Endothelial cell of umbilical vein (primary cell): ENCODE measurements at regions of chr13 and their contacts with region 1.

Region 1: DNA sequence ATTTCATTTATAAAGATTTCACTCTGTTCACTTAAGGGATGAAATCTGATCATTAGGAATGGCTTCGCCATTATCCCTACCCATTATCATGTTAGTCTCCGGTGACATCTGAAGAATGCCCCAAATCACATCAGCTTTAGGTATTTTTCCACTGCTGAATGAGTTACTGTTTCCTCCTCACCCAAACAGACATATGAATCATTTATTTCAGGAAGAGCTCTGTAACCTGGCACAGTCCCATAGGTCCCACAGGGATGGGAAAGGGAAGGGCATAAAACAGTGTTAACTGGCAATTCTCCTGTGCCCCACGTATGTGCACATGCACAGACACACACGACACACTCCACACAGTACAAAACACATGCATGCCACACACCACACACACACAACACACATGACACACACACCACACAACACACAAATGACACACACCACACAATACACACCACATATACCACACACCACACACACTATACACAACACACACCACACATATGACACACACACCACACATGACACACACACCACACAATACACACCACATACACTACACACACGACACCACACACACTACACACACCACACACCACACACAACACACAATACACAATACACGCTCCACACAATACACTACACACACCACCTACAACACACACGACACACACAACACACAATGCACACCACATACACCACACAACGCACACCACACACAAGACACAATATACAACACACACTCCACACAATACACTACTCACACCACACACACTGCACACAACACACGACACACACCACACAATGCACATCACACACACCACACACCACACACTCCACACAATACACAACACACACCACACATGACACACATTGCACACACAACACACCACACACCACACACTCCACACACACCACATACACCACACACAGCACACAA is 15.4 kb downstream of the TMEM255B start:
- DNase-seq: peak; percentile 95
- H3K4me3 ChIP-seq: no peak overlapping the region
- H3K27ac ChIP-seq: peak overlapping the region; percentile 38
- H3K4me1 ChIP-seq: peaks cover 39% of the 10 kb centered on the region
- H3K27me3 ChIP-seq: no peaks in the 10 kb centered on the region
- CTCF ChIP-seq: no peak
- POLR2A ChIP-seq: no peak

Region 2: GRCh38 chr13:113506025-113506685 is 268.3 kb before region 1 on chr13:
- CTCF ChIA-PET with region 1: no interaction called
- POLR2A ChIA-PET with region 1: no interaction called
- dilution Hi-C with region 1: no loop called
- intact Hi-C with region 1: no loop called
- DNase-seq: no peak
- H3K4me3 ChIP-seq: no peak overlapping the region
- H3K27ac ChIP-seq: no peak overlapping the region
- H3K4me1 ChIP-seq: no peaks in the 10 kb centered on the region
- H3K27me3 ChIP-seq: no peaks in the 10 kb centered on the region
- CTCF ChIP-seq: no peak
- POLR2A ChIP-seq: no peak

Region 3: DNA sequence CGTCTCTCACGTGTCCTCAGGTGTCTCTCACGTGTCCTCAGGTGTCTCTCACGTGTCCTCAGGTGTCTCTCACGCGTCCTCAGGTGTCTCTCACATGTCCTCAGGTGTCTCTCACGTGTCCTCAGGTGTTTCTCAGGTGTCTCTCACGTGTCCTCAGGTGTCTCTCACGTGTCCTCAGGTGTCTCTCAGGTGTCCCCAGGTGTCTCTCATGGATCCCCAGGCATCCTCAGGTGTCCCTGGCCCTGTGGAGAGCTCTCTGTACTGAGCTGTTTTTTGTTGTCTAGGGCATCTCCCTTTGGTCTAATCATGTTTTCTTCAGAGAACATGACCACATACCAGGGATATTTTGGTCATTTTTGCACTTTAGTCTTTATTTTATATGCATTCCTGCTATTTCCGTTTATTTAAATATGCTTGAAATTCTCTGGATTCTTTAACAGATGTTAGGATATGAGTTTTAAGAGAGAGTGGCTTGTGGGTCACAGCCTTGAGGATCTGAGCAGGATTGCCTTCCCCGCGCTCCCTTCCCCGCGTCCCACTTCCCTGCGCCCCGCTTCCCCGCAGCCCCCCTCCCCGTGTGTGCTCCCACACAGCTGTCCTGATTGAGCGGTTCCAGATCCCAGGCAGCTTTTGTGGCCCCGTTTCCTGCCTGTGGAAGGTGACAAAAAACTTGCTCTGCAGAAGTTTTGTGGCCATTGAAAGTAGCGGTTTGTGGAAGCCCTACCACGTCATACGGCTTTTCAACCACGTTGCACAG is 148.3 kb before region 1 on chr13:
- CTCF ChIA-PET with region 1: no interaction called
- POLR2A ChIA-PET with region 1: no interaction called
- dilution Hi-C with region 1: no loop called
- intact Hi-C with region 1: no loop called
- DNase-seq: peak; percentile 25
- H3K4me3 ChIP-seq: no peak overlapping the region
- H3K27ac ChIP-seq: no peak overlapping the region
- H3K4me1 ChIP-seq: peaks cover 7% of the 10 kb centered on the region
- H3K27me3 ChIP-seq: no peaks in the 10 kb centered on the region
- CTCF ChIP-seq: no peak
- POLR2A ChIP-seq: no peak

Region 4: DNA sequence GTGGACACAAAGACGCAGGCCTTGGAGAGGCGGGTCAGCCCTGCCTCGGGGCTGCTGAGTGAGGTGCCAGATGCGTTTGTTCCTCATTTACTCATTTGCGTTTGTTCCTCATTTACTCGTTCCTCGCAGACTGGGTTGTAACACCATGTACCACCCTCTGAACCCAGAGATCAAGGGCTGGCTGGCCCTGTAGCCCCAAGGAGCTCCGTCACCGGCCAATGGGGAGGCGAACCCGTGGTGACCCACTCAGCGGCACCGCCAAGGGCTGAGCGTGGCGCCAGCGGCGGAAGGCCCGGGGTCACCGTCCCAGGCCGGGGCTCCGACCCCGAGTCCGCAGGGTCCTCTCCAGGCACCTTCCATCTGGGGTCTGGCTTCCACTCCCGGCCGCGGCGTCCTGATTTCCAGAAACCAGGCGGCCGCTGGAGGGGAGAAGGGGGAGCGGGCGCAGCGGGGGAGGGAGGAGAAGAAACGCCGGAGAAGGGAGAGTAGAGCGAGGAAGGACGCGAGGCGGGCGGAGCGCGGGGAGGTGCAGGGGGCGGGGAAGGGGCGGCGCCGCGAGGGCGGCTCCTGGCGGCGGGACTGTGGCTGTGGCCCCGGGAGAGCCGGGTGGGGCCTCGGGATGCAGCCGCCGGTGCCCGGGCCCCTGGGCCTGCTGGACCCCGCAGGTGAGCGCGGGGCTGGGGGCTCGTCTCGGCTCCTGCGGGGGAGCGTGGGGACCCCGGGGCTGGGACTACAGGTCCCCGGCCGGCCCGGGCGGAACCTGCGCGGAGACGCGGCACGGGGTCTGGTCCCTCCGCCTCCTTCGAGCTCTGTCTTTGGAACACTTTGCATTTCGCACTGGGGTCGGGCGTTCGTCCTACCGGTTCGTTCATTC is 15.6 kb before region 1 on chr13 and contains the start of gene TMEM255B:
- CTCF ChIA-PET with region 1: interaction called, 8 read pairs
- POLR2A ChIA-PET with region 1: no interaction called
- dilution Hi-C with region 1: no loop called
- intact Hi-C with region 1: loop called (anchors 1 kb)
- DNase-seq: peak; percentile 81
- H3K4me3 ChIP-seq: peak within 1 kb of the TSS; percentile 80 to 93 (median 91)
- H3K27ac ChIP-seq: peak within 1 kb of the TSS; percentile 87
- H3K4me1 ChIP-seq: peaks cover 18% of the 10 kb centered on the region
- H3K27me3 ChIP-seq: no peaks in the 10 kb centered on the region
- CTCF ChIP-seq: peak in 1 of 2 donors; percentile 28
- POLR2A ChIP-seq: peak; percentile 78
- total RNA-seq, gene TMEM255B: 85.0 and 105 TPM in 2 replicates

Region 5: GRCh38 chr13:113785051-113786010 is 10.9 kb after region 1 on chr13:
- CTCF ChIA-PET with region 1: interaction called, 8 read pairs
- POLR2A ChIA-PET with region 1: no interaction called
- dilution Hi-C with region 1: no loop called
- intact Hi-C with region 1: loop called (anchors 1 kb)
- DNase-seq: peak; percentile 80
- H3K4me3 ChIP-seq: no peak overlapping the region
- H3K27ac ChIP-seq: peak overlapping the region; percentile 48
- H3K4me1 ChIP-seq: peaks cover 14% of the 10 kb centered on the region
- H3K27me3 ChIP-seq: no peaks in the 10 kb centered on the region
- CTCF ChIP-seq: no peak
- POLR2A ChIP-seq: no peak